Posterior vena cava (tissue), 2 donors: ENCODE measurements at regions of chr1 and their contacts with region 1.

Region 1: GRCh38 chr1:23763041-23763577 is 15.1 kb upstream of the PITHD1 start:
- DNase-seq: no peak

Region 2: DNA sequence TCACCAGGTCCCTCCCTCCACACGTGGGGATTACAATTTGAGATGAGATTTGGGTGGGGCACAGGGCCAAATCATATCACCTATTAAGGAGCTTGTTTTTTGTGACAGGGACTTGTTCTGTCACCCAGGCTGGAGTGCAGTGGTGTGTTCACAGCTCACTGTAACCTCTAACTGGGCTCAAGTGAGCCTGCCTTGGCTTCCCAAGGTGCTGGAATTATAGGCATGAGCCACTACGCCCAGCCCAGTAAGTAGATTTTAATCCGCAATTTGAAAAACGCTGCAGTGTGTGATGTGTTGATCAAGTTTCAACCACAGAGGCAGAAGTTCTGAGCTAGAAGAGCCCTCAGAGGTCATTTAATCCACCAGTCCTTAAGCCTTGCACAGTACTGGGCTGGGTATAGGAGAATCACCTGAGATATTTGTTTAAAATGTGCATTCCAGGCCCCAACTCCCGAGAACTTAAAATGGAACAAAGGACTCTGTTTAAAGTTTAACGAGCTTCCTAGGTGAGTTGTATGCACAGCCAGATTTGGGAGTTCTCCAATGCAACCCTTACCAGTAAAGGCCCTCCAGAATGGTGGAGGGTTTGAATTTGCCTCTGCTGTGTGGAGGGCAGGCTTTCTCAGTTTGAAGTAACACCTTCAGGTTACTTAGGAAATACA is 58.1 kb before region 1 on chr1:
- intact Hi-C with region 1: no loop called
- DNase-seq: no peak

Region 3: DNA sequence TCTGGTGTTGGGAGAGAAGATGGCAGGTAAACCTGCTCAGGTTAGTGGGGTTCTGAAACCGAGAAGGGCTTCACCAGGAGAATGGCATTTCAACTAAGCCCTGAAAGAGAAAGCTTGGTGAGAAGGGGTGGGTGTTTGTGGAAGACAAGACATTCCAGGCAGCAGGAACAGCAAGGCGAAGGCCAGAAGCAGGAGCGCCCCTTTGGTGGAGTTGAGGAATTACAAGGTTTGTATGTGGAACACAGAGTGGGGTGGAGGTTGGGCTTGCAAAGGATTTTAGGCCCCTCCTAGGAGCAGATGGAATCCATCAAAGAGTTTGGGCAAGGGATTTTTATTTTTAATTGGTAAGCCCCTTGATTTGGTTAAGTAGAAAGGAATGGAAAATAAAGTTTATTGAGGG is 44.6 kb before region 1 on chr1:
- intact Hi-C with region 1: no loop called
- DNase-seq: no peak

Region 4: DNA sequence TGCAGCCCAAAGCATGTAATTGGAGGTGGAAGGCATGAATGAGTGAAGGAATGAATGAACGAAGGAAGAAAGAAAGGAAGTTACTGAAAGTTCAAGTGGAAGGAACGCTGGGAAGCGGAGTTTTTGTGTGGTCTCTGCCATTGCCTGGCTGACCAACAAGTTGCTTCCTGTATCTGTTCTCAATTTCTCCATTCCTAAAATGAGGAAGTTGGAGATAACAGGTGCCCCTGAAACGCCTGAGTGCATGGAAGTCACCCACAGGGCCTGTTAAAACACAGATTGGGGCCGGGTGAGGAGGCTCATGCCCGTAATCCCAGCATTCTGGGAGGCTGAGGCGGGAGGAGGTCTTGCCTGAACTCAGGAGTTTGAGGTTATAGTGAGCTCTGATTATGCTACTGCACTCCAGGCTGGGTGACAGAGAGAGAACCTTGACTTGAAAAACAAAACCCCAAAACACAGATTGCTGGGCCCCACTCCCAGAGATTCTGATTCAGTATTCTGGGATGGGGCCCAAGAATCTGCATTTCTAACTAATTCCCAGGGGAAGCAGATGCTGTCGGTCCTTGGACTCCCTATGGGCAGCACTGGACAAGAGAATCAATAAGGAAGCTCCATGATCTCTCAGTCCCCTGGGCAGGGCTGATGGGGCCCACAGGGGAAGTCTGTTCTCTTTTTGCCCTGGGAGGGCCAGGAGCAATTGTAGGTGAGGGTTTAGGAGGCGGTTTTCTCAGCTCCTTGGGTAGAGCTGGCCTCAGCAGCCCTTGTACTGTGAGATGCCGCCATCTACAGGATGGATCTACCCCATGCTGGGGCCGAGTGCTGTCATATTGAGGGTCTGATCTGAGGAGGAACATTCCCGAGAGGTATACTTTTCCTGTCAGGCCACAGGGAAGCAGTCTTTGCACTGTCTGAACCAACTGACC is 153.4 kb after region 1 on chr1:
- intact Hi-C with region 1: loop called in 1 of 2 experiments (anchors 10 kb)
- DNase-seq: peak; percentile 85